A673 (cell line): ENCODE measurements at regions of chr3 and their contacts with region 1.

Region 1: GRCh38 chr3:170414202-170414663 is 4.4 kb upstream of the CLDN11 start:
- DNase-seq: peak; percentile 82
- H3K4me3 ChIP-seq: no peak overlapping the region
- H3K27ac ChIP-seq: no peak overlapping the region
- H3K4me1 ChIP-seq: no peaks in the 10 kb centered on the region
- H3K27me3 ChIP-seq: no peaks in the 10 kb centered on the region
- CTCF ChIP-seq: peak; percentile 93

Region 2: GRCh38 chr3:169863458-169863899 is 550.8 kb before region 1 on chr3:
- CTCF ChIA-PET with region 1: no interaction called
- POLR2A ChIA-PET with region 1: no interaction called
- intact Hi-C with region 1: loop called (anchors 5 kb)
- DNase-seq: peak; percentile 79
- H3K4me3 ChIP-seq: no peak overlapping the region
- H3K27ac ChIP-seq: no peak overlapping the region
- H3K4me1 ChIP-seq: no peaks in the 10 kb centered on the region
- H3K27me3 ChIP-seq: no peaks in the 10 kb centered on the region
- CTCF ChIP-seq: peak; percentile 94

Region 3: DNA sequence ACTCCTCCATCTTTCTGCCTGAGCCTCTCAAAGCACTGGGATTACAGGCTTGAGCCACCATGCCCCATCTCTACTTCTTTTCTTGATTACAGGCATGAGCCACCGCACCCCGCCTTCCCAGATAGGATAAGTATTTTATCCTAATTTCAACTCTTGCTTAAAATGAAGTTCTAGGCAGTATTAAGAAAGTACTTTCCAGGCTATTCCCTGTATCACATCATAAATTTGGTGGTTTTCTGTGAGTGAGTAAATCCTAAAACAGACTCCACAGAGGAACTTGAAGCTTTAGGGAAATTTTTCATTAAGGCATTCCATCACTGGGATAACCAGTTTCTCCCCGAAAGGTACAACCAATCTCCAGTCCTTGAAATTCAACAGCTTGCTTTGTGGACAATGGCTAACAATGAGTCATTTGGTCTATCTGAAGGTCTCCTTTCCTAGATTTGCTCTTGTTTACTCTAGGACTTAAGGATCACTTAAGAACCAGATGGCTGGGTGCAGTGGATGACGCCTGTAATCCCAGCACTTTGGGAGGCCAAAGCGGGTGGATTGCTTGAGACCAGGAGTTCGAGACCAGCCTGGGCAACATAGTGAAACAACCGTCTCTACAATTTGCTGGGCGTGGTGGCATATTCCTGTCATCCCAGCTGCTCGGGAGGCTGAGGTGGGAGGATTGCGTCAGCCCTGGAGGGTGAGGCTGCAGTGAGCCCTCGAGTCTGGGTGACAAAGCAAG is 106.4 kb before region 1 on chr3:
- CTCF ChIA-PET with region 1: no interaction called
- POLR2A ChIA-PET with region 1: no interaction called
- intact Hi-C with region 1: loop called (anchors 1 kb)
- DNase-seq: no peak
- H3K4me3 ChIP-seq: no peak overlapping the region
- H3K27ac ChIP-seq: no peak overlapping the region
- H3K4me1 ChIP-seq: no peaks in the 10 kb centered on the region
- H3K27me3 ChIP-seq: no peaks in the 10 kb centered on the region
- CTCF ChIP-seq: no peak

Region 4: GRCh38 chr3:170517242-170517945 is 103.2 kb after region 1 on chr3:
- CTCF ChIA-PET with region 1: no interaction called
- POLR2A ChIA-PET with region 1: no interaction called
- intact Hi-C with region 1: no loop called
- DNase-seq: no peak
- H3K4me3 ChIP-seq: no peak overlapping the region
- H3K27ac ChIP-seq: no peak overlapping the region
- H3K4me1 ChIP-seq: no peaks in the 10 kb centered on the region
- H3K27me3 ChIP-seq: no peaks in the 10 kb centered on the region
- CTCF ChIP-seq: no peak

Region 5: DNA sequence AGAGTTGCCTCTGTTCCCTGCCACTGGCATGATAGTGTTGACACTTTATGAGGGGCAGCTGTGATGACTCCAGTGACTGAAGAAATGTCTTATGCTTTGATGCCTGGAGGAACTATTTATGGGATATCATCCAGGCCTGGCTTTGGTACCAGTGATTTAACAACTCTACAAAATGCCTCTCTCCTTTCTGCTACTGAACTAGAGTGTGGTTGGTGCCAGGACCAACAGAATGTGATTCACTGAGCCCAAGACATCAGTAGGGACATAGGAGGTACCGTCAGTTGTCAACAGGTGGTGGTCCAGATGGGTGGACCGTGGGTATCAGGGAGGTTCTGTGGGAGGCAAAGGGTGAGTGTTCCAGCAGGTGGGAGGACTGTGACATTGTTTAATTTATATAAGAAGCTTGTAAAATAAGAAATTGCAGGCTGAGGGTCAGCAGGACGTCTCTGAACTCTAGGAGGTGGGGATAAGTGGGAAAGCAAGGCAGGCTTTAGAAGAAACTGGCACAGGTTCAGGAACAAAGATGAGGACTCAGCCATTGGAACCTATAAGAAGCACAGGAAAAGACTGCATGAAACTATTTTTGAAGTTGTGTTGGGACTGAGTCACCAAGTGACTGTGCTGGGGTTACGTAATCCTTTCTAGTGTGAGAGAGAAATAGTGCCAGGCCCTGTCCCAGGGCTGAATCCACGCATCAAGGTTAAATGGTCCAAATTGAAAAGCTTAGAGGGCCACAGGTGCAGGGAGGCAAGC is 200.2 kb after region 1 on chr3:
- CTCF ChIA-PET with region 1: no interaction called
- POLR2A ChIA-PET with region 1: no interaction called
- intact Hi-C with region 1: no loop called
- DNase-seq: peak; percentile 35
- H3K4me3 ChIP-seq: no peak overlapping the region
- H3K27ac ChIP-seq: no peak overlapping the region
- H3K4me1 ChIP-seq: no peaks in the 10 kb centered on the region
- H3K27me3 ChIP-seq: no peaks in the 10 kb centered on the region
- CTCF ChIP-seq: no peak

Region 6: GRCh38 chr3:170811928-170812591 is 397.8 kb after region 1 on chr3:
- CTCF ChIA-PET with region 1: interaction called, 28 read pairs
- POLR2A ChIA-PET with region 1: no interaction called
- intact Hi-C with region 1: loop called (anchors 1 kb)
- DNase-seq: peak; percentile 86
- H3K4me3 ChIP-seq: no peak overlapping the region
- H3K27ac ChIP-seq: no peak overlapping the region
- H3K4me1 ChIP-seq: peaks cover 4% of the 10 kb centered on the region
- H3K27me3 ChIP-seq: no peaks in the 10 kb centered on the region
- CTCF ChIP-seq: peak; percentile 97